GM10248 (cell line): ENCODE measurements at regions of chr10 and their contacts with region 1.

Region 1: GRCh38 chr10:55091691-55092328 is 290.8 kb upstream of the PCDH15 start:
- DNase-seq: peak; percentile 3
- CTCF ChIP-seq: peak; percentile 45

Region 2: GRCh38 chr10:55063811-55064210 is 28.0 kb before region 1 on chr10:
- CTCF ChIA-PET with region 1: no interaction called
- POLR2A ChIA-PET with region 1: no interaction called
- DNase-seq: no peak
- CTCF ChIP-seq: no peak

Region 3: DNA sequence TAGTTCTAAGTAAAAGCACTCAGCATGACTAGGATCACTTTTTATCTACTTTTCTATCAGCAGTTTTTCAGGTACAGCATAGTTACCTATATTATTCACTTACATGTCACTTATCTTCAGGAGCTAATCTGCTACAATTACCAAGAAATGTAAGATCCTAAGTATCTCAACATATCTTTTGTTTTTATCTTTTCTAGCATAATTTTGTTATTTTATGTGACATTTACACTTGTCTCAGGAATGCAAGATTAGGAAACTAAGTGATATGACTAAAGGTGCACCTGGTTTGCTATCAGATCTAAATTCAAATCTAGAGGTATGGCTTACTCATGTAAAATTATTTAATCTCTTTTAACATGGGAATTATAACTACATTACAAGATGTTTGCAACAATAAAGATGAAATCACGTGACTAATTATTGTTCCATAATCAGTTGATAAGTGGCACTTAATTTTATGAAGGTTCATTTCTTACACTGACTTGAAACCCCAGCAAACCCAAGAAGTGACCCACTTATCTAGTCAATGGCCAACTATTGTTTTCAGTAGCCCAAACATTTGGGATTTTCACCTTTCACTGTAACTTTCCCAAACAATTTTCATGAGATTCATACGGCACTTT is 99.5 kb after region 1 on chr10:
- CTCF ChIA-PET with region 1: no interaction called
- POLR2A ChIA-PET with region 1: no interaction called
- DNase-seq: no peak
- CTCF ChIP-seq: no peak

Region 4: DNA sequence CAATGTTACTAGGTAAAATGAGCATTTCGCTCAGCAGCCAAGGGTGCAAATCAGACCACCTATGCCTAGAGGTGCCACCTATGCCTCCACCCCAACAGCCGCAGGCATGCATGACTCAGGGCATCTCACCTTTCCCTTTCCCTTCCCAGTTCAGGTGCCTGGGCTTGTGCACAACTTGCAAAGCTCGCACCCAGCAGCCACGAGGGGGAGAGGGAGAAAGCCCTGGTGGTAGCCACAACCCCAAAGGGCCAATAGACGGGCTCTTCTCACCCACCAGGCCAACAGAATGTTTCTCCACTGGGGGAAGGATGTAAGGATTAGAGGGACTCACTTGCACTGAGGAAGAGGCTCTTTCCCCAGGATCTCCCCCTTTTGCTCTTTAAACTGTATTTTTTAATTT is 171.5 kb after region 1 on chr10:
- CTCF ChIA-PET with region 1: interaction called, 10 read pairs
- POLR2A ChIA-PET with region 1: no interaction called
- DNase-seq: no peak
- CTCF ChIP-seq: no peak